ENCODE measurements at regions of chr3 and their contacts with region 1.

Region 1: GRCh38 chr3:143951351-143951971 is 20.2 kb upstream of the DIPK2A start:
- DNase-seq: peak; percentile 49
- H3K4me3 ChIP-seq: no peak overlapping the region
- H3K27ac ChIP-seq: no peak overlapping the region
- H3K4me1 ChIP-seq: no peaks in the 10 kb centered on the region
- H3K27me3 ChIP-seq: no peaks in the 10 kb centered on the region
- CTCF ChIP-seq: peak; percentile 42 to 54
- POLR2A ChIP-seq: no peak

Region 2: DNA sequence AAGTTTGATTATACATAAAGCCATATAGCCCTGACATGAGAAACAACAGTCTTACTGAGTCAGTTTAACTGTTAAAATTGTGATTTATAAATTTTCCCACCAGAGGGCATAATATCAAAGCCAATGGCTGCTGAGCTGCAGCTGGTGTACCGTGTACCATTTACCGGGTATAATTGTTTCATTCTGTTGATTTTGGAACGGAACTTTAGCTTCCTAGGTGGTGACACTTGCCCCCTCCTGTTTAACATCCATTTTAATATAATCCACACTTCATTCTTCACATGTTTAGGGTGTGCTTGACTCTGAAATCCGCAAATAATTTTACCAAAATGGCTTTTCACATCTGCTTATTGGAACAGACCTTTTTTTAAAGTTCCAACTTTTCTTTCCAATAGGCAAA is 176.0 kb before region 1 on chr3:
- CTCF ChIA-PET with region 1: interaction called, 9 read pairs
- POLR2A ChIA-PET with region 1: no interaction called
- dilution Hi-C with region 1: no loop called
- intact Hi-C with region 1: loop called (anchors 1 kb)
- DNase-seq: peak; percentile 57
- H3K4me3 ChIP-seq: no peak overlapping the region
- H3K27ac ChIP-seq: no peak overlapping the region
- H3K4me1 ChIP-seq: peaks cover 3% of the 10 kb centered on the region
- H3K27me3 ChIP-seq: no peaks in the 10 kb centered on the region
- CTCF ChIP-seq: peak; percentile 32 to 37
- POLR2A ChIP-seq: no peak

Region 3: DNA sequence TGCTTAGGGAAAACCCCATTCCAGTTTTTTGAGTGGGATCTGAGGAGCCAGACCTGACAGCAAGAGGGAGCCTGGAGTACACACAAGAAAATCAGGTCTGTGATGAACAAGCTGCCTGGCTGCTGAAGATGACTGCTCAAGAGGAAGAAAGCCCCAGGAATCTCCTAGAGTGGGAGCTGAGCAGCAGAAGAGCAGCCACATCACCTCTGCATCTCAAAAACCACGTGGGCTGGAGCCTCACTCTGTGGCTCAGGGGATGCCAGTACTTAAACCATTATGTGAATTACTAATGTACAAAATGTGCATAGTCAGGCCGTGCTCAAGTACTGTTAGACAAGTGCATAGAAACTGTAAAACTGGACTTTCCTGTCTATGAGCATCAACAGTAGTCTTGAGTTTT is 155.6 kb before region 1 on chr3:
- CTCF ChIA-PET with region 1: no interaction called
- POLR2A ChIA-PET with region 1: no interaction called
- dilution Hi-C with region 1: no loop called
- intact Hi-C with region 1: loop called (anchors 5 kb)
- DNase-seq: no peak
- H3K4me3 ChIP-seq: no peak overlapping the region
- H3K27ac ChIP-seq: no peak overlapping the region
- H3K4me1 ChIP-seq: no peaks in the 10 kb centered on the region
- H3K27me3 ChIP-seq: no peaks in the 10 kb centered on the region
- CTCF ChIP-seq: no peak
- POLR2A ChIP-seq: no peak

Region 4: DNA sequence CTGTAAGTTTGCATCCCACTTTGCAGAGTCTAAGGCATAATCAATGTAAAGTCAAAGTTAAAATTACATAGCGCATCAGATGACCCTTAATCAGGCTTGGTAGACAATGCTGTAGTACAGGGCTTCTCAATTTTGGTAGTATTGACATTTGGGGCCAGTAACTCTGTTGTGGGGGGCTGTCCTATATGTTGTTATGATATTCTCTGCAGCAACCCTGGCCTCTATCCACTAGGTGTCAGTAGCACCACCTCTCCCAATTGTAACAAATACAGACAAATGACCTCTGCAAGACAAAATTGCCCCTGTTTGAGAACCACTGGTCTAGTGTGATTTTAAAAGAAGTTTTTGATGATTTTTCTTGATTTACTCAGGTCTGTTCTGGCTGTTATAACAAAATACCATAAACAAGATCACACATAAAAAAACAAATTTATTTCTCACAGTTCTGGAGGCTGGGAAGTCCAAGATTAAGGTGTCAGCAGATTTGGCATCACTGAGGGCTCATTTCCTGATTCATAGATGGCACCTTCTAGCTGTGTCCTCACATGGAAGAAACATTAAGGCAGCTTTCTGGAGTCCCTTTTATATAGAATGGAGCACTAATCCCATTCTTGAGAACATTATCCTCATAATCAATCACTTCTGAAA is 65.6 kb before region 1 on chr3:
- CTCF ChIA-PET with region 1: no interaction called
- POLR2A ChIA-PET with region 1: no interaction called
- dilution Hi-C with region 1: no loop called
- intact Hi-C with region 1: loop called (anchors 2 kb)
- DNase-seq: peak; percentile 36
- H3K4me3 ChIP-seq: no peak overlapping the region
- H3K27ac ChIP-seq: no peak overlapping the region
- H3K4me1 ChIP-seq: peaks cover 9% of the 10 kb centered on the region
- H3K27me3 ChIP-seq: no peaks in the 10 kb centered on the region
- CTCF ChIP-seq: peak; percentile 58 to 60
- POLR2A ChIP-seq: no peak

Measured in endothelial cell of umbilical vein (primary cell).